Activated naive CD4-positive, alpha-beta T cell treated with anti-CD3 and anti-CD28 coated beads for 36 hours (primary cell): ENCODE measurements at regions of chr7 and their contacts with region 1.

Region 1: DNA sequence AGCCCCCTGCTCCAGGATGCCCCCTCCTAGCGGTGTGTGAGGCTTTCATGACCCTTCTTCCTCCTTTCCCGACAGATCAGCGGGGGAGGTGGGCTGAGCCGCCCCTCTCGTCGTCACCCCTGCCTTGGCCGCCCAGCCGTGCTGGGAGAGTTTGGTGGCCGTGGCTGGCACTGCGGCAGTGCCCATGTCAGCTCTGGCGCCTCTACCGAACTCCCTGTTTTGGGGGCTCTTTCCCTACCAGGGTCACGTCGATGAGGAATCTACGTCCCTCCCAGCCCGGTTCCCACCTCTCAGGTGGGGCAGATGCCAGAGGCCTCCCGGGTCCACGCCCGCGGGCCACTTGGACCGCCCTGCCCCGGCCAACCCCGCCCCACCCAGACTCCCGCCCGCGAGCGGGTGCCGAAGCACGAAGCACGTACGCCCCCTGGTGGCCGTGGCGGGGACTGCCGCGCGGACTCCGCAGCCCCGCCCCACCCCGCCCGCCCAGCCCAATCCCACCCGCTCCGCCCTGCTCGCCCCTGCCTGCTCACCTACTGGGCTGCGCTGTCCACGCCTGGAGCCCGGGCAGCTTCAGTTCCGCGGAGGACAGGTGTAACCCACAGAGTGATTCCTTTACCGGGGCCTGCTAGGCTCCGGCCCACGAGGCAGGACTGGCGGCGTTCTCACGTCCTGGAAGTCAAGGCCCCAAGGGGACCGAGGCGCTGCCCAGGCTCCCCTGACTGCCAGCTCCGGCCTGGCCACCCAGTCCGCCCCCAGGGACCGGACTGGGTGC is 127.1 kb downstream of the UBE2H start:
- DNase-seq: peak; percentile 89
- H3K4me3 Mint-ChIP-seq: peak overlapping the region; percentile 90
- H3K27ac Mint-ChIP-seq: no peak overlapping the region
- H3K4me1 Mint-ChIP-seq: peaks cover 21% of the 10 kb centered on the region
- H3K27me3 Mint-ChIP-seq: no peaks in the 10 kb centered on the region

Region 2: GRCh38 chr7:129279762-129280161 is 545.9 kb before region 1 on chr7:
- CTCF ChIA-PET with region 1: no interaction called
- intact Hi-C with region 1: no loop called
- DNase-seq: no peak
- H3K4me3 Mint-ChIP-seq: no peak overlapping the region
- H3K27ac Mint-ChIP-seq: no peak overlapping the region
- H3K4me1 Mint-ChIP-seq: no peaks in the 10 kb centered on the region
- H3K27me3 Mint-ChIP-seq: no peaks in the 10 kb centered on the region

Region 3: GRCh38 chr7:129343099-129343700 is 482.5 kb before region 1 on chr7:
- CTCF ChIA-PET with region 1: interaction called, 3 read pairs
- intact Hi-C with region 1: loop called (anchors 2 kb)
- DNase-seq: peak; percentile 39
- H3K4me3 Mint-ChIP-seq: no peak overlapping the region
- H3K27ac Mint-ChIP-seq: no peak overlapping the region
- H3K4me1 Mint-ChIP-seq: peaks cover 32% of the 10 kb centered on the region
- H3K27me3 Mint-ChIP-seq: no peaks in the 10 kb centered on the region

Region 4: GRCh38 chr7:129401967-129402860 is 423.5 kb before region 1 on chr7:
- CTCF ChIA-PET with region 1: interaction called, 4 read pairs
- intact Hi-C with region 1: loop called (anchors 5 kb)
- DNase-seq: peak; percentile 74
- H3K4me3 Mint-ChIP-seq: no peak overlapping the region
- H3K27ac Mint-ChIP-seq: no peak overlapping the region
- H3K4me1 Mint-ChIP-seq: peaks cover 36% of the 10 kb centered on the region
- H3K27me3 Mint-ChIP-seq: no peaks in the 10 kb centered on the region

Region 5: GRCh38 chr7:129502376-129502776 is 323.3 kb before region 1 on chr7 and contains the start of gene SMKR1:
- CTCF ChIA-PET with region 1: no interaction called
- intact Hi-C with region 1: loop called (anchors 5 kb)
- DNase-seq: peak; percentile 86
- H3K4me3 Mint-ChIP-seq: peak within 1 kb of the TSS; percentile 75
- H3K27ac Mint-ChIP-seq: no peak within 1 kb of the TSS
- H3K4me1 Mint-ChIP-seq: peaks cover 9% of the 10 kb centered on the region
- H3K27me3 Mint-ChIP-seq: no peaks in the 10 kb centered on the region
- total RNA-seq, gene SMKR1: 0.99 to 1.2 TPM

Region 6: DNA sequence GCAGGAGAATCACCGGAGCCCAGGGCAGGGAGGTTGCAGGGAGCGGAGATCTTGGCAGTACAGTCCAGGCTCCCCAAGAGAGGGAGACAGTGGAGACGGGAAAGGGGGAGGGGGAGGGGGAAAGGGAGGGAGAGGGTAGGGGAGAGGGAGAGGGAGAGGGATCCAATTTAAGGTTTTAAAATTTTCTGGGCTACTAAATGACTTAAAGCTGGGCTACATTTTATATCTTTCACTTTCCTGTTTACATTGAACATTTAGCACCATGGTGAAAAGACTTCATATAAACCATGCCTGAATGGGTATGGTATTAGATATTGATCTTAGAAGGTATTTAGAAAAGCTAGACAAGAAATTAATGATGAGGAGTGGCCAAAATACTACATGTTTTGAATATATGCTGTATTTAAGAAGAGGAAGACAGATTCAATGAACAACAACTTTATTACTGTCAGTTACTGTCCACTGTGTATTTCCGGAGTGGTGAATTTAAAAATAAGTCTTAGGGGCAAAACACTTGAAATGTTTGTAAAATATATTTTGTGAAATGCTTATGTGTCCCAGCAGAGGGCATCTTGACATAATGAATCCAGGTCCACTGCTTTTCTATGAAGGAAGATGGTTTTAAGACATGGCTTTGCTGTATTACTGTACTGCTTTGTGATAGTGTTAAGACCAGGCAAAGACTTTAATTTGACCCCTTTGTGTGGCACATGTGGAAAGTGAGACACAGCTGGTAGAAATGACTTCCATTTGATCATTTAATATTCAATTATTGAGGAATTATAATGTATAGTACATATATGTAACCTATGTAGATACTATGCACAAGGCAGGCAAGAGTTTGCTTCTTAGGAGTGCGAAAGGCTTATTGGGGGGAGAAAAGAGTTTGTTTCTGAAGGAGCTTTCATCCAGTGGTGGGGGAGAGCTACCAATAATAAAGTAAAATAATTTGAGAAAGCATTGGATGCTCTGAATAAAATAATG is 161.4 kb before region 1 on chr7:
- CTCF ChIA-PET with region 1: interaction called, 8 read pairs
- intact Hi-C with region 1: loop called (anchors 1 kb)
- DNase-seq: no peak
- H3K4me3 Mint-ChIP-seq: no peak overlapping the region
- H3K27ac Mint-ChIP-seq: no peak overlapping the region
- H3K4me1 Mint-ChIP-seq: peaks cover 4% of the 10 kb centered on the region
- H3K27me3 Mint-ChIP-seq: no peaks in the 10 kb centered on the region

Region 7: DNA sequence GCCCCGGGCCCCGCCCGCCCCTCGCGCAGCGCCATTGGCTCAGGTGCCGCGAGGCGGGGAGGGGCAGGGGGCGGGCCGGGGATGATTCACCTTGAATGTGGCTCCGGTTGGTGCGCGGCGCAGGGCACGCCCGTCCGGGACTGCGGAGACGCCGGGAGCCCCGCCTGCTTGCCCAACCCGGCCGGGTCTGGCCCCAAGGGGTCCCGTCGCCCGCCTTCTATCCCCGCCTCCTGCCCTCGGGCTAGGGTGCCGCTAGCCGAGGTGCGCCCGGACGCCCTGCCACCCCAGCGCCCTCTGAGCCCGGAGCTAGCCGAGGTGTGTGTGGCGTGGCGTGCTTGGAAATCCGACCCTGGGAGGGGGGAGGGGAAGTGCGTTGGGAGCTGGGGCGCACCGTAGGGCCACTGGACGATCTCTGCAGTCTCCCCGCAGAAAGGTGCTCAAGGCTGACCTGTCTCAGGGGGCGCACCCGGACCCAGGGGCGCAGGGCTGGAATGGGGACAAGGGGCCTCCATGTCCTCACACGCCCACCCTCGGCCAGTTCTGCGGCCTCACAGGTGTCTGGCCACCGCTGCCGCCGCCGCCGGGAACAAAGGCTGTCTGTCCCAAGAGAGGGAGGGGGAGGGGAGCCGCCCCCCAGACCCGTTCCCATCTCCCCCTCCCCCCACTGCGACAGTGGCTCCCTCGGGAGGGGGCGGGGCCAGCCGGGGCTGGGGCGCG is 45.3 kb before region 1 on chr7:
- CTCF ChIA-PET with region 1: interaction called, 11 read pairs
- intact Hi-C with region 1: loop called (anchors 1 kb)
- DNase-seq: peak; percentile 91
- H3K4me3 Mint-ChIP-seq: peak overlapping the region; percentile 73
- H3K27ac Mint-ChIP-seq: no peak overlapping the region
- H3K4me1 Mint-ChIP-seq: peaks cover 40% of the 10 kb centered on the region
- H3K27me3 Mint-ChIP-seq: peaks cover 57% of the 10 kb centered on the region

Region 8: GRCh38 chr7:129845178-129845971 is 19.7 kb after region 1 on chr7:
- CTCF ChIA-PET with region 1: interaction called, 28 read pairs
- intact Hi-C with region 1: no loop called
- DNase-seq: no peak
- H3K4me3 Mint-ChIP-seq: no peak overlapping the region
- H3K27ac Mint-ChIP-seq: peak overlapping the region; percentile 22
- H3K4me1 Mint-ChIP-seq: peaks cover 50% of the 10 kb centered on the region
- H3K27me3 Mint-ChIP-seq: no peaks in the 10 kb centered on the region